ENCODE measurements at regions of chr7 and their contacts with region 1.

Region 1: DNA sequence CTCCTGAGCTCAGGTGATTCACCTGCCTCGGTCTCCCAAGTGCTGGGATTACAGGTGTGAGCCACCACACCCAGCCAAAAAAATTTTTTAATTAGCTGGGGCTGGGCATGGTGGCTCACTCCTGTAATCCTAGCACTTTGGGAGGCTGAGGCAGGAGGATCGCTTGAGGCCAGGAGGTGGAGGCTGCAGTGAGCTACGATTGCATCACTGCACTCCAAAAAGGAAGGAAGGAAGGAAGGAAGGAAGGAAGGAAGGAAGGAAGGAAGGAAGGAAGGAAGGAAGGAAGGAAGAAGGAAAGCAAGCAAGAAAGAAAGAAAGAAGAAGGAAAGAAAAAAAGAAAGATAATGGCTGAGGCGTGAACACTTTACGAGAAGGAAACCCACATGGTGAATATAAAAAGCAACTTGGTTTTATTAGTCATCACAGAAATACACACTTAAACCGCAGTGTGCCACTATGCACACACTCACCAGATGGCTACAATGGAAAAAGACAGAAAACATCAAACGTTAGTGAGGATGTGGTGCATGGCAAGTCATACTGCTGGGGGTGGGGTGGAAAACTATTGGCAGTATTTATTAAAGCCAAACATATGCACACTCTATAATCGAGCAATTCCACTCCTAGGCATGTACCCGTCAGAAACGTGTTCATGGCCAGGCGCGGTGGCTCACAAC is 4.4 kb upstream of the CCL26 start:
- DNase-seq: peak; percentile 67
- ATAC-seq: peak; percentile 60; the same call in 1 of the 2 replicates
- H3K4me3 ChIP-seq: no peak overlapping the region
- H3K27ac ChIP-seq: no peak overlapping the region
- H3K4me1 ChIP-seq: no peaks in the 10 kb centered on the region
- H3K27me3 ChIP-seq: no peaks in the 10 kb centered on the region
- CTCF ChIP-seq: no peak

Region 2: GRCh38 chr7:76031964-76032363 is 255.5 kb after region 1 on chr7:
- CTCF ChIA-PET with region 1: no interaction called
- POLR2A ChIA-PET with region 1: interaction called, 10 read pairs
- in situ Hi-C with region 1: no loop called
- intact Hi-C with region 1: no loop called
- DNase-seq: no peak
- ATAC-seq: no peak
- H3K4me3 ChIP-seq: no peak overlapping the region
- H3K27ac ChIP-seq: no peak overlapping the region
- H3K4me1 ChIP-seq: no peaks in the 10 kb centered on the region
- H3K27me3 ChIP-seq: no peaks in the 10 kb centered on the region
- CTCF ChIP-seq: no peak